ENCODE measurements at regions of chr12 and their contacts with region 1.

Region 1: GRCh38 chr12:56718149-56718548 is 7.0 kb downstream of the NACA start:
- DNase-seq: no peak
- ATAC-seq: no peak
- H3K4me3 ChIP-seq: no peak overlapping the region
- H3K4me3 Mint-ChIP-seq: no peak overlapping the region
- H3K27ac ChIP-seq: no peak overlapping the region
- H3K27ac Mint-ChIP-seq: no peak overlapping the region
- H3K4me1 ChIP-seq: peaks cover 46 to 65% of the 10 kb centered on the region in 2 experiments
- H3K4me1 Mint-ChIP-seq: peaks cover 66 to 69% (median 68%) of the 10 kb centered on the region in 3 donors
- H3K27me3 ChIP-seq: no peaks in the 10 kb centered on the region
- H3K27me3 Mint-ChIP-seq: no peaks in the 10 kb centered on the region

Region 2: GRCh38 chr12:56670836-56671235 is 47.3 kb before region 1 on chr12:
- CTCF ChIA-PET with region 1: no interaction called
- POLR2A ChIA-PET with region 1: no interaction called
- DNase-seq: no peak
- ATAC-seq: no peak
- H3K4me3 ChIP-seq: no peak overlapping the region
- H3K4me3 Mint-ChIP-seq: no peak overlapping the region
- H3K27ac ChIP-seq: no peak overlapping the region
- H3K27ac Mint-ChIP-seq: no peak overlapping the region
- H3K4me1 ChIP-seq: peaks cover 4 to 16% of the 10 kb centered on the region in 2 experiments
- H3K4me1 Mint-ChIP-seq: peaks cover 30 to 45% (median 42%) of the 10 kb centered on the region in 3 donors
- H3K27me3 ChIP-seq: no peaks in the 10 kb centered on the region
- H3K27me3 Mint-ChIP-seq: no peaks in the 10 kb centered on the region

Region 3: DNA sequence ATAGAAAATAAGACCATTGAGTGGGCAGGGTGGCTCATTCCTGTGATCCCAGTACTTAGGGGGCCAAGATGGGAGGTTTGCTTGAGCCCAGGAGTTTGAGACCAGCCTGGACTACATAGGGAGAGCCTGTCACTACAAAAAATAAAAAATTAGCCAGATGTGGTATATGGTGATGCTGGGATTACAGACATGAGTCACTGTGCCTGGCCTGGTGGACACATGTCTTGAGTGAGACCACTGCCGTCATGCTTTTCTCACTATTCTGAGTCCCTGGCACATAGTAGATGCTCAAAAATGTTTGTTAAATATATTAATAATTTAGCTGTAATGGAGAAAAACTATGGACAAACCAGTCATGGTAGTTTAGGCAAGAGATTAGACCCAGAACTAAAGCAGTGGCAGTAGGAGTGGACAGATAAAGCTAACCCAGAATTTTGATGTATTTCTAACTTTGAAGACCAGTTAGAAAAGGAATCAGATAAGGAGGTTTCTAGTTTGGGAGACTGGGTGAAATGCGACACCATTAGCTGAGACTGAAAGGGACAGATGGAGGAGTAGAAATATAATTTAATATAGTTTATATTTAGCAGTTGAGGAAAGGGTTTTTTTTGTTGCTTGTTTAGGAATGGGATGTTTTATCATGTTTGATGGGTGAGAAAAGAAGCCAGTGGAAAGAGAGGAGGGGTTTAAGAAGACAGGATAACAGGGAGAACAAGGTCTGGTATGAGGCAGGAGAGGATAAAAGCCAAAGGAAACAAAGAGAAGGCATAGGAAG is 22.6 kb before region 1 on chr12:
- CTCF ChIA-PET with region 1: interaction called in 1 of 2 experiments, 5 read pairs
- POLR2A ChIA-PET with region 1: interaction called, 10 to 13 read pairs
- DNase-seq: no peak
- ATAC-seq: no peak
- H3K4me3 ChIP-seq: no peak overlapping the region
- H3K4me3 Mint-ChIP-seq: no peak overlapping the region
- H3K27ac ChIP-seq: no peak overlapping the region
- H3K27ac Mint-ChIP-seq: peak overlapping the region in 1 of 2 donors; percentile 10
- H3K4me1 ChIP-seq: no peaks in the 10 kb centered on the region
- H3K4me1 Mint-ChIP-seq: no peaks in the 10 kb centered on the region
- H3K27me3 ChIP-seq: peaks cover 0 to 2% of the 10 kb centered on the region in 2 experiments
- H3K27me3 Mint-ChIP-seq: no peaks in the 10 kb centered on the region

Measured in T-cell (primary cell).